CD4-positive, alpha-beta T cell (primary cell): ENCODE measurements at regions of chr16 and their contacts with region 1.

Region 1: DNA sequence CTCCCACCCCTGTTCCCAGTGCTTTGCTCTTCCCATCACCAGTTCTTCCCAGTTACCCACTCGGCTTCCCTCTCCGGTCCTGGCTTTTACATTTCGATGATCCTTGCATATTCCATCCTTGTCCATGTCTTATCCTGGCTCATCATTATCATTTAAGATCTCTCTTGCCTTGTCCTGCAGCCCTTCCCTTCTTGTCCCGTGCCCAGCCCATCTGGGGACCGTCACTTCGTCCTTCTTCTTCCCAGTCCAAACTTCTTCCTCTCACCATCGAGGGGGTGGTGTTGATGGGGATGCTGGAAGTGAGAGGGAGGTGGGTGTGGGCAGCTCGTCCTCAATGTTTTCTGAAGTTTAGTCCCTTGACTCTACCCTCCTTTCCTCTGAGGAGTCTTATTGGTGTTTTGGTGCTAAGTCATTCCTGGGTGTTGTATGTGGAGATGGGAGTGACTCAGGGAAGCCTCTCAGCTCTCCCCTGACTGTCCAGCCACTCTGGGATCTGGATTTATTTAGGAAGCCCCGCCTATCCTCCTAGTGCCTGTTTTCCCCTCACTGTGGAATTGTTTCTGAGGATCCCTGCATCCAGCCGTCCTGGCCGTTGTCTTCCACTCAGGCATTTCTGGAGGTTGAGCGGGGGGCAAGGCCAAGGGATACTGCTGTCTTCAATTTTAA is 975 bp downstream of the SNX29 start:
- DNase-seq: peak in 2 of 14 experiments; percentile 7 to 9
- ATAC-seq: no peak
- H3K4me3 ChIP-seq: peak overlapping the region; percentile 99
- H3K4me3 Mint-ChIP-seq: peak overlapping the region; percentile 96
- H3K27ac ChIP-seq: no peak overlapping the region
- H3K27ac Mint-ChIP-seq: peak overlapping the region; percentile 81
- H3K4me1 ChIP-seq: peaks cover 25% of the 10 kb centered on the region
- H3K4me1 Mint-ChIP-seq: peaks cover 40% of the 10 kb centered on the region
- H3K27me3 ChIP-seq: no peaks in the 10 kb centered on the region
- H3K27me3 Mint-ChIP-seq: no peaks in the 10 kb centered on the region
- CTCF ChIP-seq: no peak

Region 2: DNA sequence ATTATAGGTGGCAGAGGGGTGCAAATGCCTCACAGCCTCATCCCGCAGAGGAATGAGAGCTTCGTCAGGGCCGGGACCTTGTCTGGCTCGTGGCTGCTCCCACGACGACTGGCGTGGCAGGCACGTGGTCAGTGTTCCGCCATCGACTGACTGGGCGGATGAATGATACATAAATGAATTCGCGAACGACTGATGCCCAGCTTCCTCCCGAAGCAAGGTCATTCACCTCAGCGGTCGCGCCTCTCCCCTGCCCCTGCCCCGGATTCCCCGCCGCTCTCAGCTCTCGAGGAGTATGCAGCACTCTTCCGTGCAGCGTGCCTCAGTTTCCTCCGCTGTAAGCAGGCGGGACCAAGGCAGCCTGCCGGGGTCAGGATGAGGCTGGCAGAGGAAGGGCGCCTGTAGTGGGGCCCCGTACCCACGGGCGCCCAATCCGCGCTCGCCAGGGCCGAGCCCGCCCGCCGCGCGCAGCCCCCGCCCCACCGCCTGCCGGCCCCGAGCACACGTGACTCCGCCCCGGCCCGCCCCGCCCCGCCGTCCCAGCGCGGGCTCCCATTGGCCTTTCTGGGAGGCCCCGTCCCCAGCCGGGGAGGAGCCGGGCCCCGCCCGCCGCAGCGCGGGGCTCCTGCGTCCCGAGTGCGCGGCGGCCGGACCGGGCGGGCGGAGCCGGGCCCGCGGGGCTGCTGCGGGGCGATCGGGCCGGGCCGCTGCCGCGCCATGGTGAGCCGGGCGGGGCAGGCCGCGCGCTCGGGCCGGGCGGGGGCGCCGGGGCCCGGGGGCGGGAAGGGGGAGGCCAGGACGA is 309.5 kb before region 1 on chr16 and contains the start of gene SNN:
- CTCF ChIA-PET with region 1: no interaction called
- POLR2A ChIA-PET with region 1: no interaction called
- intact Hi-C with region 1: loop called in 1 of 2 experiments (anchors 5 kb)
- DNase-seq: peak; percentile 72 to 94 (median 84)
- ATAC-seq: peak; percentile 84
- H3K4me3 ChIP-seq: peak within 1 kb of the TSS; percentile 62
- H3K4me3 Mint-ChIP-seq: peak within 1 kb of the TSS; percentile 97
- H3K27ac ChIP-seq: peak within 1 kb of the TSS; percentile 57
- H3K27ac Mint-ChIP-seq: peak within 1 kb of the TSS; percentile 94
- H3K4me1 ChIP-seq: peaks cover 88% of the 10 kb centered on the region
- H3K4me1 Mint-ChIP-seq: peaks cover 73% of the 10 kb centered on the region
- H3K27me3 ChIP-seq: no peaks in the 10 kb centered on the region
- H3K27me3 Mint-ChIP-seq: no peaks in the 10 kb centered on the region
- CTCF ChIP-seq: no peak
- total RNA-seq, gene SNN: 76.3 to 79.7 TPM

Region 3: DNA sequence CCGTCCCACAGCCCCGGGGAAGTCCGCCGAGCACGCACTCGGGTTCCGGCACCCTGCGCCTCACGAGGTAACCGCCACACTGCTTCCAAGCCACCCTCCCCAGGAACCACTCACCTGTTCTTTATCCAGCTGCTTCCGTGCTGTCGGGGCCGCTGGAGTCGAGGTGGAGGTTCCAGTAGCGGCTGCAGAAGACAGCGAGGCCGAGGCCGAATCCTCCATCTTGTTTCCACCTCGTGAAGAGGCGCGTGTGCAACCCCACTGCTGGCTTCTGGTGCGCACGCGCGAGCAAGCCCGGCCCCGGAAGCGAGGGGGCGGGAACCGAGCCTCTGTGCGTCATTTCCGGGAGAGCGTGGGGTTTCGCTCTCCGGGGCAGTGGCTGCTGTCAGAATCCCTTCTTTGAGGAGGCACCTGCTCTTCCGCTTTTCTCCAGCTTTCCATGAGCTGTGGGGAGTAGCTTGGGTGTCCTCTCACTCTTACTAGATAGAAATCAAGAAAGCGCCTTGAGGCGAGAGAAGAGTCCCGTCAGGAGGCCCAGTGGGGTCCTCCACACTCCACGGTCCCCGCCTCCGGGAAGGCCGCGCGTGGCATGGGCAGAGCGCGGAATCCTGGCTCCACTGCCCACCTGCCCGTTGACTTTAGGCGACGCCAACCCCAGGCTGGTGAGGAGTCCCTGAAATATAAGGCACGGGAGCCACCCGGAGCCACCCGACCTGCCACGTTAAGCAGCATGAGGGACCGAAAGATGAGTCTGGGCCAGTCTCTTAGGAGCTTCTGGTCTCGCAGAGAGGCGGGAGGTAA is 126.0 kb before region 1 on chr16 and contains the start of gene RSL1D1:
- CTCF ChIA-PET with region 1: no interaction called
- POLR2A ChIA-PET with region 1: no interaction called
- intact Hi-C with region 1: loop called in 1 of 2 experiments (anchors 5 kb)
- DNase-seq: peak; percentile 87 to 98 (median 92)
- ATAC-seq: peak; percentile 85
- H3K4me3 ChIP-seq: peak within 1 kb of the TSS; percentile 75
- H3K4me3 Mint-ChIP-seq: peak within 1 kb of the TSS; percentile 97
- H3K27ac ChIP-seq: peak within 1 kb of the TSS; percentile 78 to 86
- H3K27ac Mint-ChIP-seq: peak within 1 kb of the TSS; percentile 96
- H3K4me1 ChIP-seq: peaks cover 42% of the 10 kb centered on the region
- H3K4me1 Mint-ChIP-seq: peaks cover 68% of the 10 kb centered on the region
- H3K27me3 ChIP-seq: no peaks in the 10 kb centered on the region
- H3K27me3 Mint-ChIP-seq: no peaks in the 10 kb centered on the region
- CTCF ChIP-seq: no peak
- total RNA-seq, gene RSL1D1: 224 to 237 TPM

Region 4: DNA sequence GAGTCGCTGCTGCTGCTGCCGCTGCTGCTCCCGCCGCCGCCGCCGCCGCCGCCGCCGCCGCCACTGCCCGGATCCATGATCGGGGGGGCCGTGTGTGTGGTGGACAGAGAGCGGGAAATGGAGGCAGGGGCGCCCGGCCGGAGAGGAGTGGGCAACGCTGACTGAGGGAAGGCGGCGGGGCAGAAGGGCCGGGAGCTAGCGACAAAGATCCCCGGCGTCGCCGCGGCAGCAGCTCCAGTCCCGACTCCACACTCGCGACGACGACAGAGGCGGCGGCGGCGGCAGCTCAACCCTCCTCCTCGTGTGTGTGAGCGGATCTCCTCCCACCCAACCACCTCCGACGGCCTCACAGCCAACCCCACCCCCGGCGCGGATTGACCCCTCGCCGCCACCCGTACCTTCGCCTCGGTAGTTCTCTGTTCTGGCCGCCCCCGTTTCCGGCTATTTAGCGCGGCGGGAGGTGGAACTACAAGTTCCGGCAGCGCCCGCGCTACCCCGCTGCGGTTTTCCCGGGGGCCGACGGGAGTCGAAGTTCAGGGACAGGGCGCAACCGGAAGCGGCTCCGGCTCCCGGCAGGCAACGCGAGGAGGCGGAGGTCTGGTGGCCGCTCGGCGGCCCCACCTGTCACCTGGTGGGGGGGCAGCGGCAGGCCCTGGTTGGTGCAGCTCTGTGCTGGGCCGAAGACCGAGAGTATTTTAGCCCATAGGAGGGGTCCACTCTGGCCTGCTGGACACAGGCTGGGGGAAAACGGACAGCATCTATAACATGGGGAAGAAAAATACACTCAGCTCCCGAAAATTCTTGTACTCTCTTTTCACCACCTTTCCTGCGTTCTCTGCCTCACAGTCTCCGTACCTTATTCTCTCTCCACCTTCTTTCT is 61.6 kb before region 1 on chr16 and contains the start of gene GSPT1:
- CTCF ChIA-PET with region 1: interaction called, 3 read pairs
- POLR2A ChIA-PET with region 1: no interaction called
- intact Hi-C with region 1: loop called in 1 of 2 experiments (anchors 1 kb)
- DNase-seq: peak; percentile 98 to 99 (median 99)
- ATAC-seq: peak; percentile 84
- H3K4me3 ChIP-seq: peak within 1 kb of the TSS; percentile 82
- H3K4me3 Mint-ChIP-seq: peak within 1 kb of the TSS; percentile 98
- H3K27ac ChIP-seq: peak within 1 kb of the TSS; percentile 84 to 86
- H3K27ac Mint-ChIP-seq: peak within 1 kb of the TSS; percentile 98
- H3K4me1 ChIP-seq: peaks cover 32% of the 10 kb centered on the region
- H3K4me1 Mint-ChIP-seq: peaks cover 33% of the 10 kb centered on the region
- H3K27me3 ChIP-seq: peaks cover 0 to 2% of the 10 kb centered on the region in 2 experiments
- H3K27me3 Mint-ChIP-seq: no peaks in the 10 kb centered on the region
- CTCF ChIP-seq: no peak
- total RNA-seq, gene GSPT1: 257 to 269 TPM